Heart right ventricle (tissue), 16 donors: ENCODE measurements at regions of chr12 and their contacts with region 1.

Region 1: GRCh38 chr12:46661110-46661845 is 164.5 kb downstream of the SLC38A4 start:
- DNase-seq: peak in 1 of 2 donors; percentile 60
- ATAC-seq: peak; percentile 81 to 88 (median 84)
- H3K4me3 ChIP-seq: no peak overlapping the region
- H3K27ac ChIP-seq: peak overlapping the region in 8 of 10 donors; percentile 34 to 73 (median 65)
- H3K4me1 ChIP-seq: peaks cover 4 to 62% (median 43%) of the 10 kb centered on the region in 9 donors
- H3K27me3 ChIP-seq: no peaks in the 10 kb centered on the region
- CTCF ChIP-seq: peak; percentile 50 to 91 (median 84)

Region 2: GRCh38 chr12:45990468-45991283 is 670.6 kb before region 1 on chr12 and contains the start of gene SCAF11:
- intact Hi-C with region 1: loop called in 2 of 10 experiments (anchors 2 to 10 kb)
- DNase-seq: peak; percentile 100
- ATAC-seq: peak; percentile 92 to 97 (median 95)
- H3K4me3 ChIP-seq: peak within 1 kb of the TSS; percentile 68 to 97 (median 86)
- H3K27ac ChIP-seq: peak within 1 kb of the TSS; percentile 96 to 100 (median 99)
- H3K4me1 ChIP-seq: peaks cover 7 to 49% (median 39%) of the 10 kb centered on the region in 9 donors
- H3K27me3 ChIP-seq: no peaks in the 10 kb centered on the region
- CTCF ChIP-seq: peak; percentile 90 to 98 (median 94)
- total RNA-seq, gene SCAF11: 71.9 to 112 (median 87.3) TPM

Region 3: GRCh38 chr12:46209914-46210872 is 451.1 kb before region 1 on chr12:
- intact Hi-C with region 1: loop called in 1 of 10 experiments (anchors 5 kb)
- DNase-seq: peak; percentile 25 to 37
- ATAC-seq: peak; percentile 51 to 95 (median 78)
- H3K4me3 ChIP-seq: no peak overlapping the region
- H3K27ac ChIP-seq: peak overlapping the region; percentile 42 to 73 (median 58)
- H3K4me1 ChIP-seq: peaks cover 0 to 76% (median 39%) of the 10 kb centered on the region in 9 donors
- H3K27me3 ChIP-seq: no peaks in the 10 kb centered on the region
- CTCF ChIP-seq: no peak

Region 4: DNA sequence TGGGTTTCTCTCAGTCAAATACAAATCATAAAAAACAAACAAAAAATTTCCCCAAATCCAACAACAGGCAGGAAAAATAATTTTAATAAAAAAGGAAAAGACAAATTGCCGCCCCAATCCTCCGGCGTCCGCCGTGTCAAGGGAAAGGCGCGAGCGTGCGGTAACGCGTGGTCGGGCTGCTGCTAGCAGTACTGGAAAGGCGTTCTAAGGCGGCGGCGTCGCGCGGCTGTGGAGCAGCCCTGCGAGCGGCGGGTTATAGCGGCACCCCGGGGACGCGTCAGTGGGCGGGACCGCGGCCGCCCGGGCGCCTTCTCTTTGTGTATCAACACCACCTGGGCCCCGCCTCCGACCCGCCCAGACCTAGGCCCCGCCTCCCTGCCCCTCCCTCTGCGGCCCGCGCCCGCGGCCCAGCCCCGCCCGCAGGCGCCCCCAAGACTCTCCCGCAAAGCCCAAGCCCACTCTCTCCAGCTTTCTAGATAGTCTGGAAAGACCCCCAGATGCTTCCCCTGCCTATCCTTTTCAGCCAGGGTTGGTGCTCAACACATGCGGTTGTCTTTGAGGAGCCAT is 288.7 kb before region 1 on chr12 and contains the start of gene SLC38A2:
- intact Hi-C with region 1: loop called in 8 of 10 experiments (anchors 1 to 10 kb)
- DNase-seq: peak; percentile 97 to 99
- ATAC-seq: peak; percentile 95 to 98 (median 96)
- H3K4me3 ChIP-seq: peak within 1 kb of the TSS; percentile 73 to 98 (median 89)
- H3K27ac ChIP-seq: peak within 1 kb of the TSS; percentile 94 to 99 (median 98)
- H3K4me1 ChIP-seq: peaks cover 15 to 45% (median 38%) of the 10 kb centered on the region in 9 donors
- H3K27me3 ChIP-seq: no peaks in the 10 kb centered on the region
- CTCF ChIP-seq: no peak
- total RNA-seq, gene SLC38A2: 82.1 to 203 (median 110) TPM

Region 5: GRCh38 chr12:46386877-46387629 is 274.2 kb before region 1 on chr12:
- intact Hi-C with region 1: no loop called
- DNase-seq: peak; percentile 42 to 61
- ATAC-seq: no peak
- H3K4me3 ChIP-seq: peak overlapping the region in 8 of 10 donors; percentile 1 to 35 (median 24)
- H3K27ac ChIP-seq: peak overlapping the region in 9 of 10 donors; percentile 38 to 100 (median 98)
- H3K4me1 ChIP-seq: peaks cover 0 to 79% (median 44%) of the 10 kb centered on the region in 9 donors
- H3K27me3 ChIP-seq: no peaks in the 10 kb centered on the region
- CTCF ChIP-seq: no peak

Region 6: GRCh38 chr12:46523863-46524770 is 137.2 kb before region 1 on chr12:
- intact Hi-C with region 1: loop called in 2 of 10 experiments (anchors 5 kb)
- DNase-seq: no peak
- ATAC-seq: peak in 2 of 8 donors; percentile 14 to 15
- H3K4me3 ChIP-seq: no peak overlapping the region
- H3K27ac ChIP-seq: peak overlapping the region; percentile 6 to 85 (median 76)
- H3K4me1 ChIP-seq: peaks cover 10 to 52% (median 39%) of the 10 kb centered on the region in 9 donors
- H3K27me3 ChIP-seq: no peaks in the 10 kb centered on the region
- CTCF ChIP-seq: no peak

Region 7: DNA sequence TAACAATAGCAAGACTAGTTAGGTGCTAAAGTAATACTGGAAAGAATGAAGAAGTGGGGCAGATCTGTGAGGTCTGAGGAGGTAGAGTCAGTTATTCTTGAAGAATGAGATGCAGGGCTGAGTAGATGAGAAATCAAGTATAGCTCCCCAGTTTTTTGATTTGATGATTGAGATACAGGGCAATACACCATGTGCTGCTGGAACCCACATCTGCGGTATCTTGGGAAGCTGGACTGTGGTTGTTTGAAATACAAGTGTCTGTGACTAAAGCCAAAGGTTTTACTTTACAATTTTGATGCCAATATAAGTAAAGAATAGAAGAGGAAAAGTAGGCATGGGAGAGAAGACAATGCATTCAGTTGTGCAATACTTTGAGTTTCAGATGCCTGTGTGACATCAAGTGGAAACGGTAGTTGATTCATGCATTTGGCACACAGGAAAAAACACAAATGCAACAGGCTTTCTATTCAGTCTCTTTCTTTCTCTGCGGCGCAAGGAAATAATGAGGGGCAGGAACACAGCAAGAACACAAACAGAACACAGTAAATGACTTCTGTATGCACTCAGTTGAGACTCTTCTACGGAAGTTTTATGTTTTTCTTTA is 98.6 kb before region 1 on chr12:
- intact Hi-C with region 1: loop called in 2 of 10 experiments (anchors 5 to 10 kb)
- DNase-seq: no peak
- ATAC-seq: peak in 1 of 8 donors; percentile 42
- H3K4me3 ChIP-seq: no peak overlapping the region
- H3K27ac ChIP-seq: peak overlapping the region in 1 of 10 donors; percentile 57
- H3K4me1 ChIP-seq: peaks cover 0 to 21% (median 15%) of the 10 kb centered on the region in 9 donors
- H3K27me3 ChIP-seq: no peaks in the 10 kb centered on the region
- CTCF ChIP-seq: no peak

Region 8: GRCh38 chr12:47236109-47236714 is 574.9 kb after region 1 on chr12:
- intact Hi-C with region 1: no loop called
- DNase-seq: no peak
- ATAC-seq: peak; percentile 38 to 88 (median 60)
- H3K4me3 ChIP-seq: no peak overlapping the region
- H3K27ac ChIP-seq: peak overlapping the region in 3 of 10 donors; percentile 43 to 79 (median 50)
- H3K4me1 ChIP-seq: peaks cover 0 to 29% (median 12%) of the 10 kb centered on the region in 9 donors
- H3K27me3 ChIP-seq: no peaks in the 10 kb centered on the region
- CTCF ChIP-seq: no peak